ENCODE measurements at regions of chr2 and their contacts with region 1.

Region 1: DNA sequence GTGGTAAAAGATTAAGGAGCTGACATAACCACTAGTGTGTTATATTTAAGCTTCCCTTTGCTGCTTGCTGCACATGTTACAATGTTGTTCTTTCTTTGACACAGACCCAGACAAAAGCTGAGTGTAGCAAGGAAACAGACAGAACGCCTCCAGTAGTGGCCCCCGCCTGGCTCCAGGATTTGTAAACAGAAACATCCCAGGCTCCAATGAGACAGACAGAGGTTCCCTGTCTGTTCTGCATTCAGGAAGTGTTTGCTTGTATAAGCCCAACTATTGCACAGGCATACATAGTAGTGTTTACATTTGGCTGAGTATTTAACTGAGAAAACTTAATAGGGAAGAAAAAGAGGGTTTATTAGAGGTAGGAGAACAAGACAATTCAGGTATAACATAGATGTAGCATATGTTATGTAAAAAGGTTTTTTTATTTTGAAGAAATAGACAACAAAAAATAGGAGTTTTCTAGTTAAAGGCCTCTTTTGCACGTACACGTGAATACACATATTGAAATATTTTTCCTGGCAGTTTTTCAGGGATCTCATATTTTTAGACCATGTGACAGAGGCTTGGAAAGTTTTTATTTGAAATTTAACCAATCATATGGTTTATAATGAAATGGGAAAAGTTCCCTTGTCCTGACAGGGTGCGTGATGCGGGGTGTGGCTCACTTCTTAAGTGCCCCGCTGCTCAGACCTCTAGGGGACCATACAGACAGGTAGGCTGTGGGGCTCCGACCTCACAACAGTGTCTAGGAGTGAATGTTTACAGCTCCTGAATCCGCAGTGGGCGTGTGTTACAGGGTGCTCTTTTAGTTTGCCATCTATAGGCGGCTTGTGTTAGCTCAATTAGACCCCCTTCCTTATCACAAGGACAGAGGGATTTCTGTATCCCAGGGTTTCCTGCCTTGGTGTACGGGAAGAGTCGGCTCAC is 118.4 kb downstream of the BMPR2 start:
- DNase-seq: peak in 2 of 4 donors; percentile 78 to 88
- ATAC-seq: peak; percentile 84
- H3K4me3 ChIP-seq: no peak overlapping the region
- H3K27ac ChIP-seq: no peak overlapping the region
- H3K4me1 ChIP-seq: peaks cover 3 to 15% of the 10 kb centered on the region in 2 donors
- H3K27me3 ChIP-seq: no peaks in the 10 kb centered on the region
- CTCF ChIP-seq: no peak

Region 2: DNA sequence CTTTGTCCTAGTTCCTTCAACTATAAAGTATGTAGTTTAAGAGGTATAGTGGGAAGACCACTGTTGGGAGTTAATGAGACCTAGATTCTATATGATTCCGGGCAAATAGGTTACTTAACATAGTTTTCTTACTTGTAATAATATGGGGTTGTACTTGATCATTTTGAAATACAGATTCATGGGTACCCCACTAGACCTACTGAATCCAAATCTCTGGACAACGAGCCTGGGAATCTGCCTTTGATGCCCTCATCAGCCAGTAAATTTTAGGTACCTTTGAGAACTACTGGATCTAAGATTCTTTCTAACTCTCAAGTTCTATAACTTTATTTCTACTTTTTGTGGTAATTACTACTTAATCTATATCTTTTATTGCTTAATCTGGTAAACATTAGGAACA is 111.9 kb before region 1 on chr2:
- intact Hi-C with region 1: loop called in 1 of 2 experiments (anchors 5 kb)
- DNase-seq: no peak
- ATAC-seq: no peak
- H3K4me3 ChIP-seq: no peak overlapping the region
- H3K27ac ChIP-seq: no peak overlapping the region
- H3K4me1 ChIP-seq: peaks cover 10 to 55% of the 10 kb centered on the region in 2 donors
- H3K27me3 ChIP-seq: no peaks in the 10 kb centered on the region
- CTCF ChIP-seq: no peak

Region 3: GRCh38 chr2:202436626-202437025 is 57.9 kb before region 1 on chr2:
- intact Hi-C with region 1: no loop called
- DNase-seq: no peak
- ATAC-seq: no peak
- H3K4me3 ChIP-seq: no peak overlapping the region
- H3K27ac ChIP-seq: peak overlapping the region in 1 of 2 donors; percentile 8
- H3K4me1 ChIP-seq: peaks cover 0 to 9% of the 10 kb centered on the region in 2 donors
- H3K27me3 ChIP-seq: no peaks in the 10 kb centered on the region
- CTCF ChIP-seq: no peak